CD8-positive, alpha-beta T cell (primary cell): ENCODE measurements at regions of chr2 and their contacts with region 1.

Region 1: DNA sequence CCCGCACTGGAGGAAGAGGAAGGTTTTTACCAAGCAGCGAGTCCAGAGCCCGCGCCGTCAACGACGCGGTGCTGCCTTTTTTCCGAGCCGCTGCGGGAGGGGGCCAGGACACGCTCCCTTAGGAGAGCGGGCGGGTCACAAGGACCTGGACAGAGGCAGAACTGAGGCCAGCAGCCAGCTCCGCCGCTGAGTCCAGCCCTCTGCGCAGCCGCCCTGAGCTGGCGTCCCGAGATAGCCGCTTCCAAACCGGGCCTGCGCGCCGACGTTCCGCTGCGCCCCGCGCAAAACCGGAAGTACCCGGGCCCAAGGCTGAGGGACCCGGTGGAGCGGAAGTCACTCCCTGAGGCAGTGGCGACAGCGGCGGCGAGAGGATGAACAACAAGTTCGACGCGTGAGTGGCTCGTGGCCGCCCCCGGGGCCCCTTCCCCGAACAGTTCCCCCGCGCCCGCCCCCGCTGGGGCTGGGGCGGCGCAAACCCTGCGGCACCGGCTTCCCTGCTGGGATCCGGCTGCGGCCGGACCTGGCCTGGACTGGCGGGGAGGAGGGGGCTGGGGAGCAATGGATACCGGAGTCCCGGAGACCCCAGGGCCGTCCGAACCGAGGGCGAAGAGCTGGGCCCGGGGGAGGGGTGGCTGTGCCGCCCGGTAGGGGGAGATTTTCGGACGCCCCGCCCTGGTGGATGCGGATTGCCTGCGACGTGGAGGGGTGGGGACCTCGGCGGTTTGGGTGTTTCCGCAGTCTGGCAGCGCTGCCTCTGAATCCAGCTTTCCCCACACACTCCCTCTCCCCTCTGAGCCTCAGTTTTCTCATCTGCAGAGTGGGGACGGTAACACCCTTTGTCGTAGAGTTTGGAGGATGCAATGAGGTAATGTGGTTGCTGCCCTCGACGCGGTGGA is at the starts of genes EIF4E2 and TIGD1:
- DNase-seq: peak; percentile 78 to 94 (median 91)
- ATAC-seq: peak; percentile 82
- H3K4me3 ChIP-seq: peak within 1 kb of the TSS; percentile 74 to 91
- H3K4me3 Mint-ChIP-seq: peak within 1 kb of the TSS; percentile 100
- H3K27ac ChIP-seq: peak within 1 kb of the TSS; percentile 86 to 88
- H3K27ac Mint-ChIP-seq: peak within 1 kb of the TSS; percentile 100
- H3K4me1 ChIP-seq: peaks cover 28% of the 10 kb centered on the region
- H3K4me1 Mint-ChIP-seq: peaks cover 80% of the 10 kb centered on the region
- H3K27me3 ChIP-seq: no peaks in the 10 kb centered on the region
- H3K27me3 Mint-ChIP-seq: no peaks in the 10 kb centered on the region
- CTCF ChIP-seq: peak; percentile 55
- total RNA-seq, gene EIF4E2: 53.8 to 55.2 TPM
- total RNA-seq, gene TIGD1: 16.5 to 17.2 TPM

Region 2: DNA sequence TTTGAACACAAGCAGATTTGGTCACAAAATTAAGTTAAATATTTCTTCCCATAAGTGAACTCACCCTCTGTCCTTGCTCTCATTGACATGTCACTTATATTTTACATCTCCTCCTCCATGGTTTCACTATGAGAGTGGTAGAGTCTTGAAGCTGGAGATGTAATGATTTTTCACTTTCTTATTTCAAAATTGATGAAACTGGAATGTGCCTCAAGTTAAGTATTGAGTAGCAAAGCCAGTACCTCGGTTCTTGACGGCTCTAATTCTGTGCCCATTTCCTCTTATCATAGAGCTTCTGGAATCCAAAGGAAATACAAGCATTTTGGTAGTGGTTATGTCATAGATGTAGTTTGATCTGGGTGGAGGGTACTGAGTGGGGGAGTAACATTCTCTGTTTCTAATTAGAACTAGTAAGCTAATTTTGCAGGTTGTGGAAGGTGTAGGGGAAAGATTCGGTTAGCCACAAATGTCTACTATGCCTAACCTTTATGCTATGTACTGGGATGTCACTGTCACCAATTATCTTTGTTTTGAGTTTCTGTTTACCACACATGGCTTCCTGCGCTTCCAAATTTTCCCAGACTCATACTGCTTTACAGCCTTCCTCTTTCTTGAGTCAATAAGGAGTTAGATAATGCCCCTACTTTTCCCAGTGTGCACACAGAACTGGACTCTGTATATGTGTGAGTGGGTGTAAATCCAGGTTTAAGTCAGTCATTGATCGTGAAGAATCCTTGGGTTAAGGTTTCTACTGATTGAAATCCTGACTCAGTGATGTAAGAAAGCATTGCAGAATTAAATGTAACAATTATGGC is 492.3 kb before region 1 on chr2:
- CTCF ChIA-PET with region 1: no interaction called
- POLR2A ChIA-PET with region 1: no interaction called
- intact Hi-C with region 1: no loop called
- DNase-seq: no peak
- ATAC-seq: no peak
- H3K4me3 ChIP-seq: no peak overlapping the region
- H3K4me3 Mint-ChIP-seq: no peak overlapping the region
- H3K27ac ChIP-seq: no peak overlapping the region
- H3K27ac Mint-ChIP-seq: no peak overlapping the region
- H3K4me1 ChIP-seq: no peaks in the 10 kb centered on the region
- H3K4me1 Mint-ChIP-seq: peaks cover 26% of the 10 kb centered on the region
- H3K27me3 ChIP-seq: no peaks in the 10 kb centered on the region
- H3K27me3 Mint-ChIP-seq: no peaks in the 10 kb centered on the region
- CTCF ChIP-seq: no peak

Region 3: DNA sequence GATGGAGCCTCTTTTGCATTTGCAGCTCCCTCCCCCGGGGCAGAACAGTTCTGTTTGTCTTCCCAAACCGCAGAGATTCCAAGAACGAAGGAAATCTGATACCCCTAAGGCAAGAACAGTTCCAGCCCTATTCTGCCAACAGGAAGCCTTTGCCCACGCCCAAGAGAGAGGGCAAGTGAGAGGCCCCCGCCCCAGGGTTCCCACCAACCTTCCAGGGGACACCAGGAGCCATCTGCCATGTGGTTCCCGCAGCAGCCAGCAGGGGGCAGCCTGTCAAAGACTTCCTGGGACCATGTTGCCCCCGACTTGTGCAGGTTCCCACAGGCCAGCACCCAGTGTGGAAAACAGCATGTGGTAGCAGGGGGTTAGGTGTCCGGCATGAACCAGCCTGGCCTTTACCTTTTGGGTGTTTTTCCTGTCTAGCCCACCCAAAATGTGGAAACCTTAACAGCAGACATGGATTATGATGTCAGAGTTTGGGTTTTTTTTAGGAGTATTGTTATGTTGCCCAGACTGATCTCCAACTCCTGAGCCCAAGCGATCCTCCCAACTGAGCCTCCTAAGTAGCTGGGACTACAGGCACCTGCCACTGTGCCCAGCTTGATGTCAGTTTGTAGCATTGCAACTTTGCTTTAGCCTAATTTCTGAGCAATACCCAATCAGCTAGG is 61.1 kb after region 1 on chr2:
- CTCF ChIA-PET with region 1: no interaction called
- POLR2A ChIA-PET with region 1: no interaction called
- intact Hi-C with region 1: loop called (anchors 1 to 2 kb)
- DNase-seq: peak; percentile 34 to 79 (median 72)
- ATAC-seq: peak; percentile 89
- H3K4me3 ChIP-seq: no peak overlapping the region
- H3K4me3 Mint-ChIP-seq: no peak overlapping the region
- H3K27ac ChIP-seq: no peak overlapping the region
- H3K27ac Mint-ChIP-seq: no peak overlapping the region
- H3K4me1 ChIP-seq: no peaks in the 10 kb centered on the region
- H3K4me1 Mint-ChIP-seq: no peaks in the 10 kb centered on the region
- H3K27me3 ChIP-seq: no peaks in the 10 kb centered on the region
- H3K27me3 Mint-ChIP-seq: peaks cover 3% of the 10 kb centered on the region
- CTCF ChIP-seq: peak; percentile 79